GM10248 (cell line): ENCODE measurements at regions of chr2 and their contacts with region 1.

Region 1: DNA sequence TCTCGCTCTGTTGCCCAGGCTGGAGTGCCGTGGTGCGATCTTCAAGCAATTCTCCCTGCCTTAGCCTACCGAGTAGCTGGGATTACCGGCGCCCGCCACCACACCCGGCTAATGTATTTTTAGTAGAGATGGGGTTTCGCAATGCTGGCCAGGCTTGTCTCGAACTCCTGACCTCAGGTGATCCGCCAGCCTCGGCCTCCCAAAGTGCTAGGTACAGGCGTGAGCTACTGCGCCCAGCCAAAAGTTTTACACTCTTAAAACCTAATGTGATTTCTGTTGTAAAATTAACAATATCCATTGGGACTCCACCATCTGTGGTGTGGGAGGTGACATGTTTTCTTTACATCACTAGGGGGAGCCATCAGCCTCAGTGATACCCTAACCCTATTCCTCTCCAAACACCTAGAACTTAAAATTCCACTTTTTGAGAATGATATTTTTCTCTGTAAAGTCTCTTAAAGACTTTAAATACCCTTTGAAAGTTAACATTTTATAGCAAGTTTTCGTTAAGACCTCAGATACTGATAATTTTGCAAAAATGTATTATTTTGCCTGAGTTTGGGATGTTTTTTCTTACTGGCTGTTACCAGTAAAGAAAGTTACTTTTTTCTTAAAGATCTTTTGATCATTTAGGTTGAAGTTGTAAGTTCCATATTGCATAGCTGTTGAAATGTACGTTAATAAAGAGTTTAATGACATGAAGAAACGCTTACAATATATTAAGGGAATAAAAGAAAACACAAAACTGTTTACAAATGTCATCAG is 11.6 kb upstream of the EIF2AK2 start:
- DNase-seq: peak; percentile 79
- CTCF ChIP-seq: peak; percentile 68

Region 2: GRCh38 chr2:37156857-37157714 is 11.3 kb before region 1 on chr2 and contains the start of gene EIF2AK2:
- CTCF ChIA-PET with region 1: interaction called, 49 read pairs
- POLR2A ChIA-PET with region 1: no interaction called
- DNase-seq: peak; percentile 97
- CTCF ChIP-seq: no peak

Region 3: DNA sequence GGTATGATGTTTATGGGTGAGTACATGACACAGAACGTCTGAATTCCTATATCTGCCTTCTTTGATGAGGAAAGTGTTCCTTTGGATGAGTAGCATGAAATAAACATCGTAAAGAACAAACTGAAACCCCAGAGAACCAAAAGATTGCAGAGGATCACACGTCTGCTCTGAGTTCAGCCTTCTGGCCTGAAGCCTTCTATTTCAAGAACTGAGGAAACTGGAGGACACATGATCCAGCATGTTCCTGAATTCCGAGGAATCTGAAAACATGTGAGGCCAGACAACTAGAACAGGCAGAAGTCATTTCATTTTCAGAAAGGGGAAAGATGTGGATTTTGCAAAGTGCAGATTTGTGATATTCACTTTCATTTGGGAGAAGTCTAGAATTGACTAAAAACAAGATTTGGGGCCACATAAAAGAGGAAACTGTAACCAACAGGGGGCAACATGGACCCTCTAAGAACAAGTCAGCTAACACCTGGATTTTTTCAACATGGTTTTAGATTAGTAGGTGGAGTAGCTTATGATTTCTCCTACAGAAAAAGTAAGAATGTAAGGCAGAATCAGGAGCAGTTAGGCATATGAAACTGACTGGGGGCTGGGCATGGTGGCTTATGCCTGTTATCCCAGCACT is 11.7 kb after region 1 on chr2:
- CTCF ChIA-PET with region 1: interaction called, 41 read pairs
- POLR2A ChIA-PET with region 1: no interaction called
- DNase-seq: no peak
- CTCF ChIP-seq: no peak

Region 4: GRCh38 chr2:37350034-37350433 is 181.6 kb after region 1 on chr2:
- CTCF ChIA-PET with region 1: no interaction called
- POLR2A ChIA-PET with region 1: no interaction called
- DNase-seq: peak; percentile 25
- CTCF ChIP-seq: no peak

Region 5: GRCh38 chr2:37585982-37586621 is 417.7 kb after region 1 on chr2:
- CTCF ChIA-PET with region 1: no interaction called
- POLR2A ChIA-PET with region 1: no interaction called
- DNase-seq: no peak
- CTCF ChIP-seq: no peak